Activated CD4-positive, alpha-beta T cell treated with anti-CD3 and anti-CD28 coated beads for 36 hours (primary cell): ENCODE measurements at regions of chr11 and their contacts with region 1.

Region 1: DNA sequence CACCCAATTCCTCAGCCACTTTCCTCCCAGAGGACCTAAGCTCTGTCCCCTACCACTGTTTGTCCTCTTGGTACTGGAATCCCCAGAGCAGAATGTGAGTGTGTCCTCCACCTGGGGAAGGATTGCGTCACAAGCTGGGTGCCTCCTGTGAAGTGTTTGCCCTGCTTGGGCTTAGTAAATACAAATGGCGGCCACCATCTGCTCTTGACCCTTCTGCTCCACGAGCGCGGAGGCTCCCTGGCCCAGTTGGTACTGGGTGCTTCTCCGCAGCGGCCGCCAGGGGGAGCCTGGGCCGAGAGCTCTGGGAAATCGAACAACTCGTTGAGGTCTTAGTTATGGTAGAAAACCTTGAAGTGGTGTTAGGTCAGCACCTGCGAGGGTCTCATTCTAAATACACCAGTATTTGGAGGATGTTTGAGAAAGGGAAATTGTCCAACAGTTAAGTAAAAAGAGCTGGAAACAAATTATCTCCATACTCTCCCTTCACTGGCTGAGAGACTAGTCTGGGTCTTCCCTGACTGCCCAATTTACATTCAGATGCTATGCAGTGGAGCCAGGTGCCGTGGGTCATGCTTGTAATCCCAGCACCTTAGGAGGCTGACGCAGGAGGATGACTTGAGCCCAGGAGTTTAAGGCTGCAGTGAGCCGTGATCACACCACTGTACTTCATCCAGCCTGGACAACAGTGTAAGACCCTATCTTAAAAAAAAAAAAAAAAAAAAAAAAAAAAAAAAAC is 74.6 kb upstream of the TEAD1 start:
- DNase-seq: peak; percentile 74
- ATAC-seq: peak; percentile 76
- H3K4me3 Mint-ChIP-seq: no peak overlapping the region
- H3K27ac Mint-ChIP-seq: no peak overlapping the region
- H3K4me1 Mint-ChIP-seq: peaks cover 15% of the 10 kb centered on the region
- H3K27me3 Mint-ChIP-seq: peaks cover 19% of the 10 kb centered on the region

Region 2: GRCh38 chr11:12343526-12343925 is 256.1 kb before region 1 on chr11:
- CTCF ChIA-PET with region 1: interaction called, 3 read pairs
- POLR2A ChIA-PET with region 1: no interaction called
- intact Hi-C with region 1: loop called in 1 of 2 experiments (anchors 10 kb)
- DNase-seq: no peak
- ATAC-seq: no peak
- H3K4me3 Mint-ChIP-seq: no peak overlapping the region
- H3K27ac Mint-ChIP-seq: no peak overlapping the region
- H3K4me1 Mint-ChIP-seq: no peaks in the 10 kb centered on the region
- H3K27me3 Mint-ChIP-seq: no peaks in the 10 kb centered on the region

Region 3: GRCh38 chr11:12611352-12611751 is 11.8 kb after region 1 on chr11:
- CTCF ChIA-PET with region 1: interaction called, 13 read pairs
- POLR2A ChIA-PET with region 1: no interaction called
- intact Hi-C with region 1: no loop called
- DNase-seq: no peak
- ATAC-seq: no peak
- H3K4me3 Mint-ChIP-seq: no peak overlapping the region
- H3K27ac Mint-ChIP-seq: no peak overlapping the region
- H3K4me1 Mint-ChIP-seq: no peaks in the 10 kb centered on the region
- H3K27me3 Mint-ChIP-seq: peaks cover 21% of the 10 kb centered on the region

Region 4: DNA sequence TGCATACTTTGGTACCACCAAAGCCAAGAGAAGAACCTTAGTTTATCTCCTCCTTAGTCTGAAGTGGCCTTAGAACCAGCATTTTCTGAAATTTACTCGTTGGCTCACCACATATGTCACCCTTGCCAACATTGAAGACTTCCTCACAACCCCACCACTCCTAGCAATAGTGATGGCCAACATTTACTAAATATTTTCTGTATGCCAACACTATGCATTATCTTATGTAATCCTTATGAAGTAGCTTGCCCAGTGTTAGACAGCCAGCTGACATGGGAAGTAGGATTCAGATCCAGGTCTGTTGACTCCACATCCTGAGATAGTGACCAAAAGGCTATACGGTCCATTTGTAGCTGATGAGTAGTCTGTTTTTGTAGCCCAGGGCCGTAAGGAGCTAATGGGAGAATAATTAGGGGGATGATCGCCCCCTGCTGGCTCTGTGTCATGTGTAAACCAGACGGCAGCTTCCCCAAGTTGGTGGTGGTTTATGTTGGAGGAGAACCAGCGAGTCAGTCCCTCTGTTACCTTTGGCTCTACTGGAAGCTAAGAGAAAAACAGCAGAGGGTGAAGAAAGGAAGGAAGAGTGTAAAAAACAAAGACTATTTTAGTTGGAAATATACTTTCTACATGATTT is 289.1 kb after region 1 on chr11:
- CTCF ChIA-PET with region 1: interaction called, 36 read pairs
- POLR2A ChIA-PET with region 1: no interaction called
- intact Hi-C with region 1: loop called (anchors 1 to 2 kb)
- DNase-seq: peak; percentile 82
- ATAC-seq: peak; percentile 33
- H3K4me3 Mint-ChIP-seq: no peak overlapping the region
- H3K27ac Mint-ChIP-seq: no peak overlapping the region
- H3K4me1 Mint-ChIP-seq: no peaks in the 10 kb centered on the region
- H3K27me3 Mint-ChIP-seq: peaks cover 4% of the 10 kb centered on the region

Region 5: DNA sequence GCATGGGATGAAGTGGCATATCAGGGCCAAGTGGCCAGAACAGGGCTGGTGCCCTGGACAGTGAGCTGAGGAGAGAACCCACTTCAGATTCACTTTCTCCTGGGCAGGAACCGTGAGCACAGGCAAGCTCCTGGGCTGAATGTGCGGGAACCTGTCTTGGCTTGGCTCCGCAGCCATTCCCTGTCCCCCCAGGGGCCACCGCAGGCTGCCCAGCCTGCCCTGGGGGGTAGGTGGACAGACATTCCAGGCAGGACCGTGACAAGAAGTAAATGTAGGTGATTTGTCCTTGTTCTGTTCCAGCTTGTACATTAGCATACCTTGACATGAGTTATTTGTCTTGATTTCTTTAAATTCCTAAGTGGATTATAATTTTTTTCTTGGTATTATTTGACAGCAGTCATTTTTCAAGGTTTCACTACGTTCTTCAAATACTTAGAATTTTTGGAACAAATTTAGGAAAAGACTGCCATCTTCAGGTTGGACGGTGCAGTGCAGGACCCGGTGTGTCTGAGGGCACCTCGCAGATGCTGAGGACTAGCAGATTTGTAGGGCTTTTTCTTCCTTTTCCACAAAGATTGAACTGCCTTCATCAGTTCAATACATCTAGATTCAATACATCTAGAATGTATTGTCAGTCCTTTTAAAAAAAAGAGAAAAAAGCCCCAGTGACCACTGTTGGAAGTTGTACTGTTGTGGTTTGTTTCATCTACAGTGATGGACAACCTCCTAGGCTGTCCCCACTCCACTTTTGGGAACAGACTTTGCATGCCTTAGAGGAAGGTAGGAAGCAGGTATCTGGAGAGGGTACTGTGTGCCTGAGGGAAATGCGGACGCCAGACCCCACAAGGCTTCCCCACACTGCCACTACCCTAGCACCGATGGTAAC is 294.5 kb after region 1 on chr11:
- CTCF ChIA-PET with region 1: interaction called, 36 read pairs
- POLR2A ChIA-PET with region 1: no interaction called
- intact Hi-C with region 1: loop called (anchors 1 to 2 kb)
- DNase-seq: peak; percentile 79
- ATAC-seq: no peak
- H3K4me3 Mint-ChIP-seq: no peak overlapping the region
- H3K27ac Mint-ChIP-seq: no peak overlapping the region
- H3K4me1 Mint-ChIP-seq: no peaks in the 10 kb centered on the region
- H3K27me3 Mint-ChIP-seq: peaks cover 14% of the 10 kb centered on the region